Mammary epithelial cell (primary cell): ENCODE measurements at regions of chr17 and their contacts with region 1.

Region 1: DNA sequence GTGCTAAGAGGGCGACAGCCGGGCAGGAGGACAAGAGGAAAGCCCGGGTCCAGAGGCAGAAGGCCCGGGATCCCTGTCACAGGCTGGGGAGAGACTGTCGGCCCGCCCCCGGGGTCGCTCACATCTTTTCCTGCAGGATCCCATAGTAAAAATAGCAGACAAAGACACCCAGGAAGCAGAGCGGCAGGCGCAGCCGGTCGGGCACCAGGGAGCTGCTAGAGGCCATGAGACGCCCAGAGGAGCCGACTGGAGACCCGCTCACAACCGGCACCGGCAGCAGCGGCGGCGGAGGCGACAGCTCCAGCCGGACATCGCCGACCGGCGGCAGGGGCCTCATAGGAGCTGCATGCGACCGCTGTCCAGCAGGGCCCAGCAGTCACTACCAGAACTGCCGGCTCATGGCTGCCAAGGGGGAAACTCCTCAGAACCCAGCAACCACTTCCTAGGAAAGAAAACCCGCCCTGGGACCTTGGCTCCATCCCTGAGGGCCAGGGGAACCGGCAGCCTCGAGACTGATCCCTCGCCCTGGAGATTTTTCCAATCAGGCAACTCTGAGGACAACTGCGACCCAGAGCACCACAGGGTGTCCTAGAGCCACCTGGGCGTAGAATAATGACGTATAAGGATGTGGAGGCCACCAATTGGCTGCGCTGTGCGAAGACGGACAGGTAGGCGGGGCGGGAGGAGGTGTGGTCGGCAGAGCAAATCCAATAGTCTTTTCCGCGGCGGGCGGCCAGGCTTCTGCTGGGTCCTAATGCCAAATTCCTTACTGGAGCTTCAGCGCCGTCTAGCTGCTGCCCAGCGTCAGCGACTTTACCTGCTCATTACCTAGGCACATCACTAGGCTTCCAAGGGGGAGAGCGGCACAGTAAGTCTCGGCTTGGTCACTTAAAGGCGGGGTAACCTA is at the start of gene SLC35B1:
- DNase-seq: peak; percentile 98
- H3K4me3 ChIP-seq: peak within 1 kb of the TSS; percentile 82 to 94 (median 87)
- H3K27ac ChIP-seq: peak within 1 kb of the TSS; percentile 89
- H3K4me1 ChIP-seq: peaks cover 16% of the 10 kb centered on the region
- H3K27me3 ChIP-seq: no peaks in the 10 kb centered on the region
- CTCF ChIP-seq: peak; percentile 92 to 96
- total RNA-seq, gene SLC35B1: 35.5 to 55.9 TPM

Region 2: DNA sequence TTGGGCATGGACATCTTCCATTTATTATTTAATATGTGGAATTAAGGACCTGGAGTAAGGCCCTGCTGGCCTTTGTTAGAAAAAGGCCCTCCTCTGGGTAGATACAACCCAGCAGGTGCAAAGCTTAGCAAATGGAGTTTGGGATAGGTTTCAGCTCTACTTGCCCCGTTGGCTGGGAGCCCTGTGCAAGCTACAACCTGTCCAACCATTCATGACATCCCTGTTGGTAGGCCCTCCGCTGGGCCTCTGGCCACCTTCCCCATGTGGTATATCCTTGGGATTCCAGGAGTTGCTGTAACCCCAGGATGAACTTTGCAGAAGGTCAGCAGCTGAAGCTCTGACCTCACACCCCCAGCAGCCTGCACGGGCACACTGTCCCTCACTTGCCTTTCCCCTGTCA is 206.4 kb before region 1 on chr17:
- CTCF ChIA-PET with region 1: no interaction called
- dilution Hi-C with region 1: loop called (anchors 5 kb)
- in situ Hi-C with region 1: no loop called
- intact Hi-C with region 1: loop called (anchors 5 kb)
- DNase-seq: peak; percentile 65
- H3K4me3 ChIP-seq: no peak overlapping the region
- H3K27ac ChIP-seq: no peak overlapping the region
- H3K4me1 ChIP-seq: peaks cover 36% of the 10 kb centered on the region
- H3K27me3 ChIP-seq: no peaks in the 10 kb centered on the region
- CTCF ChIP-seq: no peak

Region 3: DNA sequence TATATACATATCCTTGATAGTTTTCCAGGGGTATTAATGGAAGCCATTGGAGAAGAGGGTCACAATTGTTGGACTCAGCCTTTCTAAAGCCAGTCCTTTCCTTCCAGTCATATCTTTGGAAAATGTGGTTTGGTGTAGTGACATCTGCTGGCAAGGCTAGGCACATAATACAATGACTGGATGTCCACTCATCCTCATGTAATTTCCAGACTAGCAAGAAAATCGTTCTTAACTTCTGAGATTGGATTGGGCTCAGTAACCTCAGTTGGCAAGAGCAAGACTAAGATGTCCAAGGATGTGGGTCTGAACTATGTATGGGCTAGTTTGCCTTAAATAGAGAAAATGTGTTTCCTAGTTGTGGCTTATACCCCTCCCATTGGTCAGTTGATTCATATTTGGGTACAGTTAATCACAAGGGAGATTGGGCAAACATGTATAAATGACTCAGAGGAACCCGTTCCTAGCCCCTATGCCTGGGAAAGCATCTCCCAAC is 71.9 kb after region 1 on chr17:
- CTCF ChIA-PET with region 1: no interaction called
- dilution Hi-C with region 1: no loop called
- in situ Hi-C with region 1: no loop called
- intact Hi-C with region 1: loop called (anchors 1 kb)
- DNase-seq: peak; percentile 81
- H3K4me3 ChIP-seq: no peak overlapping the region
- H3K27ac ChIP-seq: no peak overlapping the region
- H3K4me1 ChIP-seq: peaks cover 15% of the 10 kb centered on the region
- H3K27me3 ChIP-seq: no peaks in the 10 kb centered on the region
- CTCF ChIP-seq: peak; percentile 53 to 78

Region 4: GRCh38 chr17:49843774-49844350 is 136.0 kb after region 1 on chr17:
- CTCF ChIA-PET with region 1: no interaction called
- dilution Hi-C with region 1: no loop called
- in situ Hi-C with region 1: loop called in 1 of 2 experiments (anchors 25 kb)
- intact Hi-C with region 1: no loop called
- DNase-seq: no peak
- H3K4me3 ChIP-seq: no peak overlapping the region
- H3K27ac ChIP-seq: no peak overlapping the region
- H3K4me1 ChIP-seq: no peaks in the 10 kb centered on the region
- H3K27me3 ChIP-seq: no peaks in the 10 kb centered on the region
- CTCF ChIP-seq: peak; percentile 33 to 43